ENCODE measurements at regions of chr6 and their contacts with region 1.

Region 1: GRCh38 chr6:135075018-135075417 is 20.4 kb upstream of the HBS1L start:
- DNase-seq: no peak
- ATAC-seq: no peak
- H3K4me3 ChIP-seq: no peak overlapping the region
- H3K27ac ChIP-seq: no peak overlapping the region
- H3K4me1 ChIP-seq: peaks cover 8% of the 10 kb centered on the region
- H3K27me3 ChIP-seq: no peaks in the 10 kb centered on the region
- CTCF ChIP-seq: no peak

Region 2: GRCh38 chr6:135054569-135055498 is 20.2 kb before region 1 on chr6 and contains the start of gene HBS1L:
- CTCF ChIA-PET with region 1: no interaction called
- POLR2A ChIA-PET with region 1: interaction called, 28 read pairs
- intact Hi-C with region 1: no loop called
- DNase-seq: peak; percentile 98
- ATAC-seq: peak; percentile 98
- H3K4me3 ChIP-seq: peak within 1 kb of the TSS; percentile 93
- H3K27ac ChIP-seq: peak within 1 kb of the TSS; percentile 31
- H3K4me1 ChIP-seq: peaks cover 12% of the 10 kb centered on the region
- H3K27me3 ChIP-seq: no peaks in the 10 kb centered on the region
- CTCF ChIP-seq: no peak
- total RNA-seq, gene HBS1L: 44.9 and 53.2 TPM in 2 replicates

Region 3: DNA sequence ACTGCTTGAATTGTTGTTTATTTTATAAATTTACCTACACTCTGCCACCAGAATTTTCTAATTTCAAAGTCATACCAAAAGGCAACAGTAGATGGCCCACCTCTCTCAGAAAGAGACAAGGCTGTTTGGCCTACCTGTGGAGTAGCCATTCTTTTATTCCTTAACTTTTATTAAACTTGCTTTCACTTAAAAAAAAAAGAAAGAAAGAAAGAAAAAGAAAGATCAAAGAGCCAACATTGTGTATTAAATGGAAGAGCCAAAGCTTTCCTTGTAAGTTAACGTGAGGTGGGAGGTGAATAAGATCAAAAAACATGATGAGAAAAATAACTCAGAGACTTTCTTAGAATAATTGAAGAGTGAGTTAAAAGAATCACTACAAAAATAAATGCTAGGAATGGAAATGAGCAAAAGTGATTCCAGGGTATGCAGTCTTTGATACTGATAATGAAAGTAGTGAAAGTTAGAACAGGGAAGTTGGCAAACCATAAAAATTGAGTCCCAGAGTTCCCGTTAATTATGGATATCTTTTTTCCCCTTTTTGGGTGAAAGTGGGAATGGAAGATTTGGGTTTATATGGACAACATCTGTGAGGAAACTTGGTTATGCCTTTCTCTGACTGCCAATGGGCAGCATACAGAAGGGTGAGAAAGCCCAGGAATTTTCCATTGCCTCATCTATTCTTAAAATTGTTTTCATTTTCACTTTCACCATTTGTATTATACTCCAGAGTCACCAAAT is 70.2 kb after region 1 on chr6:
- CTCF ChIA-PET with region 1: no interaction called
- POLR2A ChIA-PET with region 1: no interaction called
- intact Hi-C with region 1: no loop called
- DNase-seq: peak; percentile 58
- ATAC-seq: no peak
- H3K4me3 ChIP-seq: no peak overlapping the region
- H3K27ac ChIP-seq: no peak overlapping the region
- H3K4me1 ChIP-seq: 0 out of 2 replicates have a peak, but pooled peaks cover 6% of the 10 kb centered on the region
- H3K27me3 ChIP-seq: no peaks in the 10 kb centered on the region
- CTCF ChIP-seq: peak; percentile 69

Region 4: GRCh38 chr6:135176464-135176863 is 101.4 kb after region 1 on chr6:
- CTCF ChIA-PET with region 1: no interaction called
- POLR2A ChIA-PET with region 1: no interaction called
- intact Hi-C with region 1: loop called (anchors 2 kb)
- DNase-seq: no peak
- ATAC-seq: no peak
- H3K4me3 ChIP-seq: no peak overlapping the region
- H3K27ac ChIP-seq: no peak overlapping the region
- H3K4me1 ChIP-seq: no peaks in the 10 kb centered on the region
- H3K27me3 ChIP-seq: no peaks in the 10 kb centered on the region
- CTCF ChIP-seq: no peak